Activated CD4-positive, alpha-beta T cell treated with anti-CD3 and anti-CD28 coated beads, Interleukin-2, amount 10 ng/mL, durations not matched to agents 24 days and 14 days (primary cell): ENCODE measurements at regions of chr1 and their contacts with region 1.

Region 1: GRCh38 chr1:27102707-27103491 is 52.0 kb downstream of the SLC9A1 start:
- DNase-seq: peak; percentile 95
- H3K4me3 Mint-ChIP-seq: no peak overlapping the region
- H3K27ac Mint-ChIP-seq: peak overlapping the region; percentile 66
- H3K4me1 Mint-ChIP-seq: peaks cover 21% of the 10 kb centered on the region
- H3K27me3 Mint-ChIP-seq: no peaks in the 10 kb centered on the region

Region 2: DNA sequence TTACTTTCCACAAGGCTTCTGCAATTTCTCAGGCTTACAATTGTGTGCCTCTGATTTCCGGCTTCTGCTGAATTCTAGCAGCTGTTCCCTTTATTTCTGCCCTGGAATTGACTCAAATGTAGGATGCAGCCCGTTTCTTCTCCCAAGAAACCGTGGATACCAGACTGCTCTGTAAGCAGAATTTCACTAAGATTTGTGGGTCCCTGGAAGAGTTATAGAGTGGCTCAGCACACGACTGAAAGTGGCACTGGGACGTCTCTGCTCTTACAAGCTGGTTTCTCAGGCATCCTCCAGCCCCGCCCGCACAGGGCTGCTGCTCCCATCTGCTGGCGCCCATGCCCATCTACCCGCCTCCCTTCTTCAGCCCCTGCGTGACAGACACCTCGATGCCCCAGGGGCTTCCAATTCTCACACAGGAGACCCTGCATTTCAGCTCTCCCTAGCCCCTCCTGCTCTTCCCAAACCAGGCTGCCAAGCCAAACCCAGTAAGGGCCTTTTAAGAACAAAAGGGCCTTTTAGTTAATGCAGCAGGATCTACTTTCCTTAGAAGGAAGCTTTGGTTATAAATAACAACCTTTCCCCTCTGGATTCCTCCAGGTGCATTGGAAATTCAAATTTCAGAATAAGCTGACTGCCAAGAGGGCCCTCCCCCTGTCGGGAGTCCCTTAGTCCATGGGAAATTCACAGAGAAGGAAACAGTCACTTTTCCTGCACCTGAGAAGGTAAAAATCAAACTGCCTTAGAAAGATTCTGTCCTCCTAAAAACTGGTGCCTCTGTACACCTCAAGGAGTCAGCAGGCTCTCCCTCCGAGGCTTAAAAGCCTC is 44.9 kb before region 1 on chr1:
- intact Hi-C with region 1: no loop called
- DNase-seq: no peak
- H3K4me3 Mint-ChIP-seq: no peak overlapping the region
- H3K27ac Mint-ChIP-seq: no peak overlapping the region
- H3K4me1 Mint-ChIP-seq: no peaks in the 10 kb centered on the region
- H3K27me3 Mint-ChIP-seq: no peaks in the 10 kb centered on the region

Region 3: DNA sequence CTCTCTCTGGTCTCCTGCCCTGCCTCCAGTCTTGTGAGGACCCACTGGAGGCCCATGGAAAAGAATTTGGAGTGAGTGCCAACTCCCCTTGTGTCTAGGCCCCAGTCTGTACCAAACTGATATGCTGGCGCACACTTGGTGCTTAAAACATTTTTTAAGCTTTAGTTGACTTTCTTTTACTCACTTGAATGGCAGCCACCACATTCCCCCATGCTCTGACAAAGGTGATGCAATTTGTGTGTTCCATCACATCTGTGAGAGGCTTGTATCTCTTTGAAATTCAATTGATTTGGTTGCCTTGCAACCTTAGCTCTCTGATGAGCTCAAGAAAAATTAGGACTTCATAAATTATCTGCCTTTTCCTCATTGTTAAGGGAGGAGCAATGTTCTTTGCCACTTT is 101.0 kb after region 1 on chr1:
- intact Hi-C with region 1: loop called (anchors 2 kb)
- DNase-seq: no peak
- H3K4me3 Mint-ChIP-seq: no peak overlapping the region
- H3K27ac Mint-ChIP-seq: no peak overlapping the region
- H3K4me1 Mint-ChIP-seq: no peaks in the 10 kb centered on the region
- H3K27me3 Mint-ChIP-seq: peaks cover 3% of the 10 kb centered on the region

Region 4: DNA sequence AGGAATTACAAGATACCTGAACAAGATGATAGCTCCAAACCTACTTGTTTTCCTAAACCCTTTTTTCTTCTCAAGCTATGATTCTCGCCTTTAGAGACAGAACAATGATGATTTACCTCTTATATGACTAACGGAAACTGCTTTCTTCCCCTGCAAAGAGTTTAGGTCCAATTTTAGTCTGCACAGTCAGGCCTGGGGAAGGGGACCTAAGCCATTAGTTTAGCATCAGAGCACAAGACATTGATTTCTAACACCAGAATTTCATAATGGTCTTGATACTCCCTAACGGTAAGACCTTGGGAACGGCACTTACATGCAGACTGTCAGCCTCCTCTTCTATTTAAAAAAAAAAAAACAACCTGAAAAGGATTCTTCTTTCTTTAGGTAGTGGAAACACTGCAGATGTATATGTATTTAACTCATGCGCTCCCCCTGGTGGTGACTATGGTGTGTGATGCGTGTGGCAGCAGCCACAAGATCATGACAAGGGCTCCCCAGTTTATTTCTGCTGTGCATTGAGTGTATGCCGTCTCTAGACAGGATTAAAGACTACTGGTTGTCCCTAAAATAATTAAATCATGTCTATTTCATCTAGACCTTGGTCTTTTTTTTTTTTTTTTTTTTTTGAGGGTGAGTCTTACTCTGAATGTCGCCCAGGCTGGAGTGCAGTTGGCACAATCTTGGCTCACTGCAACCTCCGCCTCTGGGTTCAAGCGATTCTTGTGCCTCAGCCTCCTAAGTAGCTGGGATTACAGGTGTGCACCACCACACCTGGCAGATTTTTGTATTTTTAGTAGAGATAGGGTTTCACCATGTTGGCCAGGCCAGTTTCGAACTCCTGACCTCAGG is 181.8 kb after region 1 on chr1:
- intact Hi-C with region 1: loop called (anchors 1 kb)
- DNase-seq: peak; percentile 96
- H3K4me3 Mint-ChIP-seq: no peak overlapping the region
- H3K27ac Mint-ChIP-seq: no peak overlapping the region
- H3K4me1 Mint-ChIP-seq: peaks cover 8% of the 10 kb centered on the region
- H3K27me3 Mint-ChIP-seq: no peaks in the 10 kb centered on the region